ENCODE measurements at regions of chr12 and their contacts with region 1.

Region 1: DNA sequence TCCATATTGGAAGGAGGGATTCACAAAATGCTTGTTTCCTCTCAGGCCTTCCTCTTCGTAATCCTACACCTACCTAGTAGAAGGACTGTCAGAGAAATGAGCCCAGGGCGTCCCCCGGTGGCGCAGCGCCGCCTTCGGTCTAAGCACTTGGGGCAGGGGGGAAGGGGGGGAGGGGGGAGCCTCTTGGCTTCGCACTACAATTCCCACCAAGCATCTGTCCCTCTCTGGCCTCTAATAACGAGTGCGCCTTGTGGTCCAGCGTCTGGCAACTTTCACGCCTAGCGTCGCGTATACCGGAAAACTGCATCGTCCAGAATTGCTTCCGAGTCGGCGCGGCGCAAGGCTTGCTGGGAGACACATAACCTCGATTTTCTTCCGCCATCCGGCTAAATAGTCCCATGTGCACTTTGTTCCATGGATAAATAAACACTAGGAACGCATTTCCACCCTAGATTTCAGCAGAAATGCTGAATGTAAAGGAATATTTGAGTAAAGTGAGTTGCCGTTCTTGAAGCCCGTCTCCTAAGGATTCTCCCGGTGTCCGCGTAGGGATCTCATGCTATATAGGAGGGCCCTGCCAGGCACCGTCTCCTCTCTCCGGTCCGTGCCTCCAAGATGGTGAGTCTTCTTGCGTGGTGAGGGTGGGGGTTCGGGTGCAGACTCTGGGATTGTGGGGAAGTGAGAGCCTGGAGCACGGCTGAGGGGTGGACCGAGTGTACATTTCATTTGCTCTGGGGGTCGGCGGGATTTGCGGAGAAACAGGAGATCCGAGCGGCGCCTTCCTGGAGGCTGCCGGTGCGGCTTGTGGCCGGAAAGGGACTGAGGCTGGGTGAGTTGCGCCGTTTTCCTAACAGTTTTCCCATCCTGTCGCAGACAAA is at the start of gene RPS26:
- DNase-seq: peak; percentile 97 to 98 (median 98)
- ATAC-seq: peak; percentile 96 to 97
- H3K4me3 ChIP-seq: peak within 1 kb of the TSS; percentile 58
- H3K27ac ChIP-seq: peak within 1 kb of the TSS; percentile 82
- H3K4me1 ChIP-seq: peaks cover 2% of the 10 kb centered on the region
- H3K27me3 ChIP-seq: no peaks in the 10 kb centered on the region
- total RNA-seq, gene RPS26: 30.0 to 55.1 (median 39.7) TPM

Region 2: GRCh38 chr12:55996715-55997534 is 44.9 kb before region 1 on chr12 and contains the start of gene SUOX:
- intact Hi-C with region 1: loop called in 3 of 4 experiments (anchors 5 to 10 kb)
- DNase-seq: peak; percentile 97 to 99 (median 98)
- ATAC-seq: peak; percentile 99
- H3K4me3 ChIP-seq: peak within 1 kb of the TSS; percentile 41
- H3K27ac ChIP-seq: peak within 1 kb of the TSS; percentile 42
- H3K4me1 ChIP-seq: no peaks in the 10 kb centered on the region
- H3K27me3 ChIP-seq: no peaks in the 10 kb centered on the region
- total RNA-seq, gene SUOX: 20.7 to 30.8 (median 29.3) TPM

Region 3: DNA sequence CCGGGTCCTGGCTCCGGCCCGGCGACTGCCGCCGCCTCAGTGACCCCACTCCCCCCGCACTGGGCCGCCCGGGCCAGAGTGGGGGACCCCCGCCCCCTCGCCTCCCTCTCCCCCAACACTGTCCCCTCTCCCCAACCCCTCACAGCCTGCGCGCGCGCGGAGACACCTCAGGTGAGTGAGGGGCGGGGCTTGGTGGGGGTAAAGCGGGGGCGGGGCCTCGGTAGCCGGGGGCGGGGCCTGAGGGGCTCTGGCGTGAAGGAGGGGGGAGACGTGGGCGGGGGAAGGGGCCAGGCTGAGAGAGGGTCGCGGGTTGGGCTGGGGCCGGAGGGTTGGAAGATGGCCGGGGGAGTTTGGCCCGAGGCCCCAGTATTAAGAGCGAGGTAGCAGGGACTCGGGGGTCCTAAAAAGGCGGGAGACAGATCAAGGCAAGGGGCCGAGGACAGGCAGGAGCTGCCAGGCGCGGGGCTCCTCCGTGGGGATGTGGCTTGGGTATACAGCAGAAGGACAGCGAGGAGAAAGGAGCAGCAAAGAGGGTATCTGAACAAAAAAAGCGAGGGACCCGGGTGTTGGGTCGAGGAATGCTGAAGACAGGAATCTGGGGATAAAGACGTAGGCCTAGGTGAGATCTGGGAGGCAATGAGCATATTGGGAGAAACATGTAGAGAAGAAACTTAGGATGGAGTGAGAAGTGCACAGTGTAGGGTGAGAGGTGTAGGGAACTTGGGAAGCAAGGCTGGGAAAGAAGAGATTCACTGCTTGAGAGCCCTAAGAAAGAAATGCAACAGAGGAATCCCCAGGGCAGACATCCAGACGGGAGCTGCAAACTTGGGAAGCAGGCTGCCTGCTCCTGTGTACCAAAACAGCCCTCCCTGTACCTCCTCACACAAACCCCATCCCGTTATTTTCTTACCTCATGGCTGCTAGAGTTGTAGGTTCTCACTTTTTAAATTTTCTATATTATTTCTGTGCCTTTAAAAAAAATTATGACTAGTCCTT is 33.9 kb before region 1 on chr12:
- intact Hi-C with region 1: loop called in 1 of 4 experiments (anchors 5 kb)
- DNase-seq: peak; percentile 61 to 89 (median 82)
- ATAC-seq: peak; percentile 84 to 88
- H3K4me3 ChIP-seq: peak overlapping the region; percentile 100
- H3K27ac ChIP-seq: peak overlapping the region; percentile 81
- H3K4me1 ChIP-seq: no peaks in the 10 kb centered on the region
- H3K27me3 ChIP-seq: no peaks in the 10 kb centered on the region

Measured in right cardiac atrium (tissue), 5 donors.